MCF 10A (cell line): ENCODE measurements at regions of chr20 and their contacts with region 1.

Region 1: GRCh38 chr20:49610701-49611538 is 43.0 kb upstream of the PTGIS start:
- DNase-seq: peak; percentile 72
- H3K4me3 Mint-ChIP-seq: no peak overlapping the region
- H3K27ac Mint-ChIP-seq: no peak overlapping the region
- H3K4me1 Mint-ChIP-seq: peaks cover 12% of the 10 kb centered on the region
- H3K27me3 Mint-ChIP-seq: no peaks in the 10 kb centered on the region
- CTCF ChIP-seq: peak; percentile 96

Region 2: GRCh38 chr20:49328790-49329189 is 282.1 kb before region 1 on chr20:
- CTCF ChIA-PET with region 1: interaction called, 5 read pairs
- POLR2A ChIA-PET with region 1: no interaction called
- intact Hi-C with region 1: loop called (anchors 5 kb)
- DNase-seq: no peak
- H3K4me3 Mint-ChIP-seq: no peak overlapping the region
- H3K27ac Mint-ChIP-seq: no peak overlapping the region
- H3K4me1 Mint-ChIP-seq: no peaks in the 10 kb centered on the region
- H3K27me3 Mint-ChIP-seq: peaks cover 33% of the 10 kb centered on the region
- CTCF ChIP-seq: no peak

Region 3: DNA sequence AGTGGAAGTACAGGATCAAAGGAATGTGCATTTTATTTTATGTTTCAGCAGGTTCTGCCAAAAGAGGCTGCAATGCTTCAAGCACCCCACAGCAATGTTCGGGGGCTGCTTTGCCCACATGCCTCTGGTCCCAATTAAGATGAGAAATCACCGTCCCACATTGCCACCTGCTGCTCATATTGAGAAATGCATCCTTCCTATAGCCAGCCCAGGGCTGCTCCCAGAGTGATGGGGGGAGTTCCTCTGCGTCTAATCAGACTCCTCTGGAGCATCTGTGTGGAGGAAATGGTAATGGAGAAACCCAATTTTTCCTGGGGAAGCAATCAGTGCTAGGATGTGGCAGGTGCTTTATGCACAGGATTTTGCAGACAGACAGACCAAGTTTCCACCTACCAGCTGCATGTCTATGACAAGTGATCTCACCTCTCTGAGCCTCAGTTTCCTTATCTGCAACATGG is 76.6 kb before region 1 on chr20:
- CTCF ChIA-PET with region 1: interaction called, 411 read pairs
- POLR2A ChIA-PET with region 1: no interaction called
- intact Hi-C with region 1: no loop called
- DNase-seq: peak; percentile 74
- H3K4me3 Mint-ChIP-seq: no peak overlapping the region
- H3K27ac Mint-ChIP-seq: no peak overlapping the region
- H3K4me1 Mint-ChIP-seq: peaks cover 4% of the 10 kb centered on the region
- H3K27me3 Mint-ChIP-seq: no peaks in the 10 kb centered on the region
- CTCF ChIP-seq: peak; percentile 87

Region 4: DNA sequence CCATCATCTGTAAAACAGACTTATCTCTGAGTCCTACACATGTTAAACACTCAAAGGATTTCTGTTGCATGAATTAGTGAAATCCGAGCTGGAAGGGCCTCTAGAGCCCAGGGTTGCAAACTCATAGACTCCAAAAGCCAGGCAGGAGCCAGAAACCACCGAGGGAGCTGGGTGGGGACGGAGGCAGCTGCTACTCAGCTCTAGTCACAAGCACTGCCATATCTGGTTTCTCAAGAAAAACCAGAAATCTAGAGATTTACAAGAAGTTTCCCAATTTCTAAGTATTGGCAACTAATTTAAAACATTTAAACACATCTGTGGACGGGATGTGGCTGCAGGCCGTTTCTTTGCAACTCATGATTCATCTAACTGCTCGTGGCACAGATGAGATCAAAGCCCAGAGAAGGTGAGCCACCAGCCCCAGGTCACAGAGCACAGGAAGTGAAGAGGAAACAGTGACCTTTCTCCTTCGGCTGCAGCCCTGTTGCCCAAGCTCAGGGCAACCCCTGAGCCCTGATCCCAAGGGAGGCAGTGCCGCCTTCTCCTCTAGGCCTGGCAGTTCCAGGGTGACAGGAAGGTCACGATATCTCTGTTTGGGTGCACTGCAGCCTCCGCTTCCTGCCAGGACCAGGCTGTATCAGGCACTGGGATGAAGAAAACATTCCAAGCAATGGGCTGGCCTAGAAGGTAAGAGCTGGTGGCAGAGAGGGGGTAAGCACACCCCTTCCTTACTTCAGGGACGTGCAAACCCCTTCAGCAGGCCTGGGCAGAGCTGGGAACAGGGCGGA is 16.6 kb before region 1 on chr20:
- CTCF ChIA-PET with region 1: interaction called, 48 read pairs
- POLR2A ChIA-PET with region 1: no interaction called
- intact Hi-C with region 1: no loop called
- DNase-seq: peak; percentile 44
- H3K4me3 Mint-ChIP-seq: no peak overlapping the region
- H3K27ac Mint-ChIP-seq: no peak overlapping the region
- H3K4me1 Mint-ChIP-seq: peaks cover 26% of the 10 kb centered on the region
- H3K27me3 Mint-ChIP-seq: no peaks in the 10 kb centered on the region
- CTCF ChIP-seq: no peak

Region 5: DNA sequence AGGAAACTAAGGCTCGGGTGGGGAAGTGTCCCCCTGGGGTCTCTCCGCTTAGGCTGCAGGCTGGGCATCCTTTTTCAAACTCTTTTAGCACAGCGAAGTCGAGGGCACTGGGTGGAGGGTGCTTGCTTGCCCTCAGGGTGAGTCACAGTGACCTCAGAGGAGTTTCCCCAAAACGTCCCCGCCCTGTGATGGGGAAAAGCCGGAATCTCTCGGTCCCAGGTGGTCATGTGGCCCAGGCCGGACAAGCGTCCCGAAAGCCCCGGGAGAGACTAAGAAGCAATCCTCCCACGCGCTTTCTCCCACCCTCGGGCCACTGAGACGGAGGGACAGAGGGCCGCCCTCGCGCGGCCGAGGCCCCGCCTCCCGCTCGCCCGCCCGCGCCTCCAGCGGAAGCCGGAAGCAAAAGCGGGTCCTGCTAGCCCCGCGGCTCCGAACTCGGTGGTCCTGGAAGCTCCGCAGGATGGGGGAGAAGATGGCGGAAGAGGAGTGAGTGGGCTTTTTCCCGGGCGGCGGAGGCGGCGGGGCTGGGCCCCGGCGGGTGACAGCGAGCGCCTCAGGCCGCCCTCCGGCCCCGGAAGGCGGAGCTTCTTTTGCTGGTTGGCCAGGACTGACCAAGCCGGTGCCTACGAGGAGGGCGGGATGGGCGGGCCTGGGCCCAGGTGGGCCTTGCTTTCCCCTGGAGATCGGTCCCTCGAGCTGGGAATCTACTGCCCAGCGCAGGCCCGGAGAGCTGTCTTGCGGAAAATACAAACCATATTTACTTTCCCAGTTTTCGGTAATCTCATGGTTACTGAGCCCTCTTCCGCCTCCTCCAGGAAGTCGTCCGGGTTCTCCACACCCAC is 201.8 kb after region 1 on chr20 and contains the start of gene SLC9A8:
- CTCF ChIA-PET with region 1: interaction called, 14 read pairs
- POLR2A ChIA-PET with region 1: interaction called, 4 read pairs
- intact Hi-C with region 1: no loop called
- DNase-seq: peak; percentile 95
- H3K4me3 Mint-ChIP-seq: peak within 1 kb of the TSS; percentile 87
- H3K27ac Mint-ChIP-seq: peak within 1 kb of the TSS; percentile 71
- H3K4me1 Mint-ChIP-seq: peaks cover 32% of the 10 kb centered on the region
- H3K27me3 Mint-ChIP-seq: no peaks in the 10 kb centered on the region
- CTCF ChIP-seq: no peak
- total RNA-seq, gene SLC9A8: 14.6 and 16.5 TPM in 2 replicates

Region 6: GRCh38 chr20:49846206-49846807 is 235.4 kb after region 1 on chr20:
- CTCF ChIA-PET with region 1: interaction called, 354 read pairs
- POLR2A ChIA-PET with region 1: interaction called, 3 read pairs
- intact Hi-C with region 1: loop called (anchors 1 kb)
- DNase-seq: peak; percentile 79
- H3K4me3 Mint-ChIP-seq: no peak overlapping the region
- H3K27ac Mint-ChIP-seq: no peak overlapping the region
- H3K4me1 Mint-ChIP-seq: peaks cover 6% of the 10 kb centered on the region
- H3K27me3 Mint-ChIP-seq: no peaks in the 10 kb centered on the region
- CTCF ChIP-seq: peak; percentile 46

Region 7: GRCh38 chr20:49888345-49888966 is 277.5 kb after region 1 on chr20:
- CTCF ChIA-PET with region 1: interaction called, 11 read pairs
- POLR2A ChIA-PET with region 1: no interaction called
- intact Hi-C with region 1: loop called (anchors 1 kb)
- DNase-seq: peak; percentile 54
- H3K4me3 Mint-ChIP-seq: no peak overlapping the region
- H3K27ac Mint-ChIP-seq: no peak overlapping the region
- H3K4me1 Mint-ChIP-seq: peaks cover 7% of the 10 kb centered on the region
- H3K27me3 Mint-ChIP-seq: no peaks in the 10 kb centered on the region
- CTCF ChIP-seq: peak; percentile 92